Calu3 (cell line): ENCODE measurements at regions of chr11 and their contacts with region 1.

Region 1: DNA sequence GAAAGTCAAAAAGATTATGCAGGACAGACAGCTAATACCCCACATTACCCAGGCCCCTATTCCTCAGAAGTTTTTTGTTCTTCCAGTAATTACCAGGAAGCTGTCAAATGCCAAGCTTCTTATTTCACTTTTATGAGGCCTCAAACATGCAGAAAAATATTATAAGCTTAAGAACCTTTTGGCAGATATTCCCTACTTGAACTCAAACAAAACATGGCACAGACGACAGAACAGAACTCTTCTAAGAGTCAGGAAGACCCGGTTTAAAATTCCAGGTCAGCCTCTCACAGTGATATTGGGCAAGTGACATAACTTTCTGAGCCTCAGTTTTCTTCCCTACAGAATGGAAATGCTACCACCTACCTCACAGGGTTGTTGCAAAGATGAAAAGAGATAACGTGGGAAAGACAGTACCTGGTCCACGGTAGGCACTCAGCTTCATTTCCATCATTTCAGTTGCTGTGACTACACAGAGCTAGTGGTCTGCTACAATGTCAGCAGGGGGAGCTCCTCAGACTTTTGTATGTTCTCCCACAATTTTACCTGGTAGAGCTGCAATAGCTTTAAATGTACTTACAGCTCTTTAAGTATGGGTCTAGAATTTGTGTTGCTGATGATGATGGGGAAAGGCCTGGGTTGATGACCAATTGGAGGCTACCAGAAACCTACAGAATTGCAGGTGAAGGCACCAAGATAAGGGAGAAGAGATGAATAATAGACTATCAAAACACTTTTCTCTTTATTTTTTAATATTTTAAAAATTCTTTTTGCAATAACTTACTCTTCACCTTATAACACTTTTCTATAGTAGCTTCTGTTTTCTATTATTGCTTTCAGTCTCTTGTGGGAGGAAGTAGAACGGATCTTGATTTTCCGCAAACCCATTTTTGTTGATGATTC is 98.3 kb upstream of the CHRM4 start:
- DNase-seq: peak; percentile 48
- H3K4me3 Mint-ChIP-seq: no peak overlapping the region
- H3K27ac Mint-ChIP-seq: no peak overlapping the region
- H3K4me1 Mint-ChIP-seq: no peaks in the 10 kb centered on the region
- H3K27me3 Mint-ChIP-seq: no peaks in the 10 kb centered on the region
- CTCF ChIP-seq: peak; percentile 47

Region 2: GRCh38 chr11:46529095-46529905 is 39.4 kb after region 1 on chr11:
- CTCF ChIA-PET with region 1: interaction called, 12 read pairs
- intact Hi-C with region 1: no loop called
- DNase-seq: peak; percentile 78
- H3K4me3 Mint-ChIP-seq: no peak overlapping the region
- H3K27ac Mint-ChIP-seq: no peak overlapping the region
- H3K4me1 Mint-ChIP-seq: peaks cover 5% of the 10 kb centered on the region
- H3K27me3 Mint-ChIP-seq: no peaks in the 10 kb centered on the region
- CTCF ChIP-seq: peak; percentile 93